ENCODE measurements at regions of chr12 and their contacts with region 1.

Region 1: GRCh38 chr12:14126692-14127091 is 145.3 kb upstream of the GRIN2B start:
- DNase-seq: no peak
- H3K4me3 ChIP-seq: no peak overlapping the region
- H3K27ac ChIP-seq: no peak overlapping the region
- H3K4me1 ChIP-seq: no peaks in the 10 kb centered on the region
- CTCF ChIP-seq: no peak

Region 2: GRCh38 chr12:14099994-14100393 is 26.7 kb before region 1 on chr12:
- CTCF ChIA-PET with region 1: no interaction called
- POLR2A ChIA-PET with region 1: no interaction called
- intact Hi-C with region 1: no loop called
- DNase-seq: peak; percentile 11
- H3K4me3 ChIP-seq: no peak overlapping the region
- H3K27ac ChIP-seq: no peak overlapping the region
- H3K4me1 ChIP-seq: peaks cover 8% of the 10 kb centered on the region
- CTCF ChIP-seq: no peak

Region 3: DNA sequence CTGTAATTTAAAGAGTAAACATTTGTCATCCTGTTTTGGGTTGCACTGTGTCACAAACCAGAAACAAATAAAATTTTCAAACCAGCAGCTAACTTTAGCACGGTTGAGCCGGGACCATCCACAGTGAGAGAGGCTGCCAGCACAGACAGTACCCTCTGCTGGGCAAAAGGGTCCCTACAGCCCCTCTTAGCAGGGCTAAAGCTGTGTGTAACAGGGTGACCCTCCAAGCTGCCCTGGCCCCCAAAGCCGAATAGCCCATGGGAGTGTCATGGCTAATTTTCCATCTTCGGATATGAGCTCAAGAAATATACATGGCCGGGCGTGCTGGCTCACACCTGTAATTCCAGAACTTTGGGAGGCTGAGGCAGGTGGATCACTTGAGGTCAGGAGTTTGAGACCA is 11.8 kb after region 1 on chr12:
- CTCF ChIA-PET with region 1: no interaction called
- POLR2A ChIA-PET with region 1: interaction called, 13 read pairs
- intact Hi-C with region 1: no loop called
- DNase-seq: peak; percentile 66
- H3K4me3 ChIP-seq: no peak overlapping the region
- H3K27ac ChIP-seq: no peak overlapping the region
- H3K4me1 ChIP-seq: peaks cover 7% of the 10 kb centered on the region
- CTCF ChIP-seq: peak; percentile 81

Region 4: DNA sequence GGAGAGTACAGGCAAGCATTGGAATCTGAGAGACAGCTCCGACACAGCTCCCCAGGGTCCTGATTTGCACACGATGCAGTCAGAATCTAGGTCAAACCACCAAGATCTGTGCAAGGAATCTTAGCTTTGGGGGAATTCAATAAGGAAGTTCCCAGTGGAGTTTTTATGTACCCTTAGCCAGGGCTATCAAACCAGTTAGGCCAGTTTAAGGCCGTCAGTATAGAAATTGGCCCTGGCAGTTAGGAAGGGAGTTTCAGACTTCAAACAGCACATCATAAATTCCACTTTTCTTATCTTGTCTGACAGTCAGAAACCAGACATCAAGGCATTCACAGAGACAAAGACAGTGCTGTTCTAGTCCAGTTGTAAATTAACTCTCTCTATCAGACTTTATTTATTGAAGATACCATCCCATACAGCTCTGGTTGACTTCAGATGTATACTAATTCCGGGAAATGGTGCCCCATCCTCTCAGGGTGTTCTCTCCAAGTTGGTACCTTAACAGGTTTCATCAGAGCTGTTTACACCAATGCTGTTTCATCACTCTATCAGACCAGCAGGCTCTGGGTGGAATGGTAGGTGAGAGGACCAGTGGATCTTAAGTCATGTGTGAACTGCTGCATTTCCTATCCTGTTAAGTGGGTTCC is 81.3 kb after region 1 on chr12:
- CTCF ChIA-PET with region 1: no interaction called
- POLR2A ChIA-PET with region 1: no interaction called
- intact Hi-C with region 1: no loop called
- DNase-seq: no peak
- H3K4me3 ChIP-seq: no peak overlapping the region
- H3K27ac ChIP-seq: no peak overlapping the region
- H3K4me1 ChIP-seq: no peaks in the 10 kb centered on the region
- CTCF ChIP-seq: no peak

Measured in OCI-LY7 (cell line).